ENCODE measurements at regions of chr17 and their contacts with region 1.

Region 1: DNA sequence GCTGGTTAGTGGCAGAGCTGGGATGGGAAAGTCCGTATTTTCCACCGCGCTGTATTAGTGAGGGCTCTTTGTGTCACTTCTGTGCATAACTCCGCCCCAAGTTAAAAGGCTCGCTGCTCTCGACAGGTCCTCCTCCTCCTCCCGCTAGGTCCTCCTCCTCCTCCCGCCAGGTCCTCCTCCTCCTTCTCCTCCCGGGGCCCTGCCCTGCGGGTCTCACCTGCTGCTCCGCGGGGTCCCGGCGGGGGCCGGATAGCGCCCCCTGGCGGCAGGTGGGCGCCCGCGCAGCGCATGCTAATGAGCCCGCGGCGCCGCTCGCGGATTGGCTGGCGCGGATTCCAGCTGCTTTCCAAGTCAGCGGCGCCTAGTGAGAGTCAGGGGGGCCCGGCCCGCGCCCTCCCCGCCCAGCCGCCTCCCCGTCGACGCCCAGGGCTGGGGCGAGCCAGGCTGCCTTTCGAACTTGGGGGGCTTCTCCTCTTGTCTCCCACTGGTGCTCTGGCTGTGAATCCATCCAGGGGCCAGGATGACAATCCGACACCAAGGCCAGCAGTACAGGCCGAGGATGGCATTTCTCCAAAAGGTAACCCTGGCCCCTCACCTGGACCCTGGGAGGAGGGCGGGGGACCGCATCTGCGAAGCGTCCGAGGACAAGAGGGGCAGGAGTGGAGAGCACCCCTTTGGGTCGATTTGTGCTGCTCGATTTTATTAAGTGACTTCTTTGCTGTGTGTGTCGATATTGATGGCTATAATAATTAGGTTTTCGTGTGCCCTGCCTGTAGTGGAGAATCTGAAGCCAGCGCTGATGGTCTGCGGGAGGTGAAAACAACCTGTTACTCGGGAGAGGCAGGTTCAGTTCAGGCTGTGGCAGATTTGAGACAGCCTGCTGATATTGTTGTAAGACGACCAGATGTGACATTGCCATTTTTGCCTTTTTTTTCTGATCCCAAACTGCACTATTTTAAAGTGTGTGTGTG is at the start of gene RGS9:
- DNase-seq: peak; percentile 89
- ATAC-seq: peak; percentile 89
- H3K4me3 Mint-ChIP-seq: peak within 1 kb of the TSS; percentile 71
- H3K27ac Mint-ChIP-seq: no peak within 1 kb of the TSS
- H3K4me1 Mint-ChIP-seq: peaks cover 24% of the 10 kb centered on the region
- H3K27me3 Mint-ChIP-seq: peaks cover 21% of the 10 kb centered on the region
- CTCF ChIP-seq: peak; percentile 99
- total RNA-seq, gene RGS9: 11.3 to 17.8 TPM (median 13.3 TPM) in 3 replicates

Region 2: DNA sequence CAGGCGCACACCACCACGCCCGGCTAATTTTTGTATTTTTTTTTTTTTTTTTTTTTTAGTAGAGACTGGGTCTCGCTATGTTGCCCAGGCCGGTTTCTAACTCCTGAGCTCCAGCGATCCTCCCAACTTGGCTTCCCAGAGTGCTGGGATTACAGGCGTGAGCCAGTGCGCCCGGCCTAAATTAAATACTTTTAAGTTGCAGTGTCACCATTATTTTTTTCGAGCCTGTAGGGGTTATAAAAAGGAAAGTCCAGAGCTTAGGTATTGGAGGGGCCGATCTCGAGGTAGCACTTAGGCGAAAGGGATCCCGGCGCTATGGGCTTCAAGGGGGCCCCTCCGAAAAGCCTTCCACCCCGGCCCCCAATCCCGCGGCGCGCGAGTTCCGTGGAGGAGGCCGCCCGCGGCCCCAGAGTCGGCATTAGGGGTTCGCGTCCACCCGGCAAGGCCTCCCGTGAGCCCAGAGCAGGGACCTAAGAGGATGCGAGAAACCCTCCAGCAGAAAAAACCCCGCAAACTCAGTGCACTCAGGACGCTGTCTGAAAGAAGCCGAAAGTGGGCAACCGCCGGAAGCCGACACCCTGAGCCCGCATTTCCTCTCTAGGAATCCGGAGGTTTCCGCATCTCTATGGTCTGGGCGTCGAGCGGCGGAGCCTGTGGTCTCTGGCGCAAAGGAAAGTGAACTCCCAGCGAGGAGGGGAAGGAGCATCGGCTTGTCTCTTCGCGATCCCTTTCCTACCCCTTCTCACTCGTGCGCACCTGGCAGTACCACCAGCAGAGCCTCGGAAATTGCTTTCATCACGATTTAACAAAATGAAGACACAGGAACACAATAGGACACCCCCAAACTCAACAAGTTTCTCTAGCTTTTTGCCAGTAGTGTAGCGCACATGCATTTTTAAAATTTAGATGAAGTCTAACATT is 14.2 kb before region 1 on chr17:
- CTCF ChIA-PET with region 1: interaction called, 14 read pairs
- POLR2A ChIA-PET with region 1: interaction called, 3 read pairs
- DNase-seq: peak; percentile 87
- ATAC-seq: peak; percentile 94
- H3K4me3 Mint-ChIP-seq: peak overlapping the region; percentile 70
- H3K27ac Mint-ChIP-seq: peak overlapping the region; percentile 61; the same call in 1 of the 2 replicates
- H3K4me1 Mint-ChIP-seq: peaks cover 8% of the 10 kb centered on the region
- H3K27me3 Mint-ChIP-seq: peaks cover 11% of the 10 kb centered on the region
- CTCF ChIP-seq: no peak

Region 3: DNA sequence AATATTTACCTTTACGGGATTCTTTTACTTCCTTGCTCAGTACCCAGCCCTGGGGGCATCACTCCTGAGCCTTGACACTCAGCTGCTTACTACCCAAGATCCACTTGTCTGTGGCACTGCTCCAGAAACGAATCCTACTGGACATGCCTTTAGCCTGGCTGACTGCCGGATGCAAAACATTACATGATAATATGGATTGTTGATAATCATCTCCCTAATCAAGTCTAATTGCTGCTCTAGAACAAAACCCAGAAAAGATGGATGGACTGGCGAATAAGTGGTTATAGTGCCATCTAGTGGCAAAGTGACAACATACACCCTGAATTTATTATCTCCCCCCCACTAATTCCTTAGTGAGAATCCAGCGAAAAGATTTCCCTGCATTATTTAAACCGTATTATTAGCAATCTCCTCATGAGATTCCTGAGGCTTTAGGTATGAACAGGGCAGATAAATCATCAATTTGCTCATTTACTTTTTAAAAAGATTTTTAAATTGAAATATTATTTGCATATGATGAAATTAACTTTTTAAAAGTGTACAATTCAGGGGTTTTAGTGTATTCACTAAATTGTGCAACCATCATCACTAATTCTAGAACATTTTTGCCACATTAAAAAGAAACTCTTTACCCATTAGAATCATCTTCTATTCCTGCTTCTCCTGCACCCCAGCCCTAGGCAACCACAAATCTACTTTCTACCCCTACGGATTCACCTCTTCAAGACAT is 61.5 kb after region 1 on chr17:
- CTCF ChIA-PET with region 1: interaction called, 10 read pairs
- POLR2A ChIA-PET with region 1: no interaction called
- DNase-seq: no peak
- ATAC-seq: peak; percentile 35
- H3K4me3 Mint-ChIP-seq: no peak overlapping the region
- H3K27ac Mint-ChIP-seq: no peak overlapping the region
- H3K4me1 Mint-ChIP-seq: 0 out of 2 replicates have a peak, but pooled peaks cover 3% of the 10 kb centered on the region
- H3K27me3 Mint-ChIP-seq: no peaks in the 10 kb centered on the region
- CTCF ChIP-seq: peak; percentile 68

Measured in WTC11 (cell line).